ENCODE measurements at regions of chr22 and their contacts with region 1.

Region 1: GRCh38 chr22:20156611-20157429 is 6.0 kb upstream of the CCDC188 start:
- DNase-seq: peak; percentile 91
- CTCF ChIP-seq: peak; percentile 99

Region 2: DNA sequence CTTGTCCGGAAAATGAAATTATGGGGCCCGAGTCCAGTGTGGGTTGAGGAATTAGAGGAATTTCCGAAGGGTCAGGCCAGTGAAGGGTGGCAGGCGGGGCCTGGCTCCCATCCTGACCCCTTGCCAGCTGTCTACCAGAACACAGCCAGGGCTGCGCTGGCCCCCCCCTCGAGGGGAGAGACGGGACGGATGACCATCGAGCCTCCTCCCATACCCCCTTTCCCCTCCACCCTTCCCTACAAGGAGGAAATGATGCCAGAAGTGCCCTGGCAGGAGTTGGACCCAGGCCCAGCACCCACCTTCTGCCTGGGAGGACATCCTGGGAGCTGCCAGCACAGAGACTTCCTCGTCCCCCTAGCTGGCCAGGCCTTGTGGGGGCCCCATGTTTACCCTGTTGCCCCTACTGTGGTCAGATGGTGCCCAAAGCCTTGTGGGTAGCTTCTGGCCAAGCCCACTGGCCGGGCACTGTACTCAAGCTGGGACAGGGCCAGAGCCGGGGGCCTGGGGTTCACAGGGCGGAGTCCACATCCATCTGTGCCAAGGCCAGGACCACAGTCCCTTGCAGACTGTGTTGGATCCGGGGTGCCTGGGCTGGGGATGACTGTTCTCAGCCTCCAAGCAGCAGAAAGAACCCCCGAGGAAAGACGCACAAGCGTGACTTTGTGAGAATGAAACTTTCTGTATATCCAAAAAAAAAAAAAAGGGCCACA is 161.0 kb before region 1 on chr22:
- CTCF ChIA-PET with region 1: no interaction called
- POLR2A ChIA-PET with region 1: no interaction called
- DNase-seq: no peak
- CTCF ChIP-seq: no peak

Region 3: GRCh38 chr22:20238536-20238900 is 81.7 kb after region 1 on chr22:
- CTCF ChIA-PET with region 1: interaction called, 19 read pairs
- POLR2A ChIA-PET with region 1: no interaction called
- DNase-seq: peak; percentile 91
- CTCF ChIP-seq: peak; percentile 73

Region 4: DNA sequence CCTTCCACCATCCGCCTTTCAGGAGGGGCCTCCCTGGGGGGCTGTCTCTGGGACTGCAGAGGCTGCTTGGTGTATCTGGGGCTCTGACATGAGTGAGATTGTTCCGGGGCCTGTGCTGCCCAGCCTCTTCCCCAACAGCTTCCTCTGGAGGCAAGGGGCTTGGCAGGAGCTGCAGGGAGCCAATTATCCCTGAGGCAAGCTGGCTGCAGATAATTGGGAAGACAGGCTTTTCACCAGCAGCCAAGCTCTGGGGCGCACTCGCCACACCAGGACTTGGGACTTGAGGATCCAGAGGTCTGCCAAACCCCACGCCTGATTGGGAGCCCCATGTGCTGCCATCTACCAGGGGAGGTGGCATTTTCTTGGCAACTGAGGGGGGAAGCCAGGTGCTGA is 126.8 kb after region 1 on chr22:
- CTCF ChIA-PET with region 1: interaction called, 21 read pairs
- POLR2A ChIA-PET with region 1: no interaction called
- DNase-seq: no peak
- CTCF ChIP-seq: no peak